ENCODE measurements at regions of chr14 and their contacts with region 1.

Region 1: DNA sequence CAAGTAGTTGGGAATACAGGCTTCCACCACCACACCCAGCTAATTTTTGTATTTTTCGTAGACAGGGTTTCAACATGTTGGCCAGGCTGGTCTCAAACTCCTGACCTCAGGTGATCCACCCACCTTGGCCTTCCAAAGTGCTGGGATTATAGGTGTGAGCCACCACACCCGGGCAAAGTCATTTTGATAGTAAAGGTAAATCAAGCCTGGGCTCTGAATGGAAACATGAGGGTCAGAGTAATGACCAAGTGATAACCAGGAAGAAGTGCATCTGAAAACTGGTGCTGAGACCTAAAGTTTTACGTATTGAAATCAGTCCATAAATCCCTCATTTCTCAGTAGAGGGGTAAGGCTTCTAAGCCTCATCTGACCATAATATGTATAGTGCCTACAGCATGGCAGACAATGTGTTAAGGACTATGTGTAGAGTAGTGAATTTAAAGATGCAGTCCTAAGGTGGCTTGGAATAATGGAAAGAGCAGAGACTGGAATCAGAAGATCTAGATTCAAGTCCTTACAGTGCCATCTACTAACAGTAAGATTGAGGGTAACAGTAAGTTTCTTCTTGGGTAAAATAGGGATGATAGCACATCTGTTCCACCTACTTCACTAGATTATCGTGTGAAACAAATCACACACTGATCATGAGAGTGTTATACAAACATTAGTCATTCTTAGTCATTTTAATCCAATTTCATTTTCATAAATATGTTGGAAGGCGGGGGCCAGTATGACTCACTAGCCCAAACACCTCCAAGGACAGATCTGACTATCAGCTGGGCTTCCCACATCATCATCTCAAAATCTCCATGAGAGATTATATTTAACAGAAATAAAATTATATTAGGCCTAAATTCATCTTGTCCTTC is 11.2 kb downstream of the MAP4K5 start:
- DNase-seq: peak; percentile 87
- H3K4me3 Mint-ChIP-seq: no peak overlapping the region
- H3K27ac Mint-ChIP-seq: peak overlapping the region; percentile 89
- H3K4me1 Mint-ChIP-seq: peaks cover 53% of the 10 kb centered on the region
- H3K27me3 Mint-ChIP-seq: no peaks in the 10 kb centered on the region

Region 2: GRCh38 chr14:49620182-49621113 is 900.7 kb before region 1 on chr14 and contains the starts of genes MGAT2 and RPL36AL:
- CTCF ChIA-PET with region 1: interaction called, 3 read pairs
- intact Hi-C with region 1: loop called (anchors 1 kb)
- DNase-seq: peak; percentile 97
- H3K4me3 Mint-ChIP-seq: peak within 1 kb of the TSS; percentile 97
- H3K27ac Mint-ChIP-seq: peak within 1 kb of the TSS; percentile 97
- H3K4me1 Mint-ChIP-seq: peaks cover 52% of the 10 kb centered on the region
- H3K27me3 Mint-ChIP-seq: no peaks in the 10 kb centered on the region
- total RNA-seq, gene MGAT2: 20.6 to 20.7 TPM
- total RNA-seq, gene RPL36AL: 250 to 266 TPM

Region 3: DNA sequence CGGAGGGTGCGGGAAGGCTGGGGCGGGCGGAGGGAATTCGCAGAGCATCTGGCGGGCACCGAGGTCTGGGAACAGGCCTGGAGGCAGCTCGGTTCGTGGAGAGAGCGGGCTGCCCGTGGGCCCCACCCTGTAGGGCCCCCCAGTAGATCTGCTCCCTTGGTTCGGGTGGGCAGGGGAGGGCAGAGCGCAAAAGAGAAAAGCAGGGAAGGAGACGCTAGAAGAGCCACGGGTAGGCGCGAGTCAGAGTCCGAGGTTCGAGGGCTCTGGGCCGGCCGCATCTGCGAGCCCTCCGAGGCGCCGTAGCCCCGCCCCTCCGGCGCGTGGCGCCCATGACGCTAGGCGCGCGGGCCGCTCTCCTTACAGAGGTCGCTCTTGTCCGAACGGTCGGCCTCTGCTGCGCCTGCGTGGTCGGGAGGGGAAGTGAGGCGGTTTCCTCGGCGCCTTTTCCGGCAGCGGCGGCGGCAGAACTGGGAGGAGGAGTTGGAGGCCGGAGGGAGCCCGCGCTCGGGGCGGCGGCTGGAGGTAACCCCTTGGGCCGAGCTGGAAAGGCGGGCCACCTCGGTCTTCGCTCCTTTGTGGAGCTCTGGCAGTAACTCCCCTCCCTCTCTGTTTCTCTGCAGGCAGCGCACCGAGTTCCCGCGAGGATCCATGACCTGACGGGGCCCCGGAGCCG is 628.4 kb before region 1 on chr14 and contains the start of gene ARF6:
- CTCF ChIA-PET with region 1: no interaction called
- intact Hi-C with region 1: loop called (anchors 1 kb)
- DNase-seq: peak; percentile 98
- H3K4me3 Mint-ChIP-seq: peak within 1 kb of the TSS; percentile 100
- H3K27ac Mint-ChIP-seq: peak within 1 kb of the TSS; percentile 100
- H3K4me1 Mint-ChIP-seq: peaks cover 19% of the 10 kb centered on the region
- H3K27me3 Mint-ChIP-seq: no peaks in the 10 kb centered on the region
- total RNA-seq, gene ARF6: 128 to 129 TPM

Region 4: DNA sequence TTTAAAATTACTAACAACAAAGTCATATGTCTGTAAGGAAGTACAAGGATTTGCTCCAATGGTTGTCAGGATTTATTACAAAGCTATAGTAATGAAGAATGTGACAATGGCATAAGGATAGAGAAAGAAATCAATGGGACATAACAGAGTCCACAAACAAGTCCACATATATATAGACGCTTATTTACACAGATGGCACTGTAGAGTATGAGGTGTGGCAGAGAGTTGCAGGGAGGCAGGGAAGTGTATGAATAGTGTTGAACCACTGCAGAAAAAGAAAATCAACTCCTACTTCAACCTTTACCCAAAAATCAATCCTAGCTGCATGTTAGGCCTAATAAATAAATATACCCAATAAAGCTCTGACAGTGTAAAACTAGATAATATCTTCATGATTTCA is 311.1 kb before region 1 on chr14:
- CTCF ChIA-PET with region 1: no interaction called
- intact Hi-C with region 1: no loop called
- DNase-seq: no peak
- H3K4me3 Mint-ChIP-seq: no peak overlapping the region
- H3K27ac Mint-ChIP-seq: no peak overlapping the region
- H3K4me1 Mint-ChIP-seq: peaks cover 5% of the 10 kb centered on the region
- H3K27me3 Mint-ChIP-seq: no peaks in the 10 kb centered on the region

Region 5: DNA sequence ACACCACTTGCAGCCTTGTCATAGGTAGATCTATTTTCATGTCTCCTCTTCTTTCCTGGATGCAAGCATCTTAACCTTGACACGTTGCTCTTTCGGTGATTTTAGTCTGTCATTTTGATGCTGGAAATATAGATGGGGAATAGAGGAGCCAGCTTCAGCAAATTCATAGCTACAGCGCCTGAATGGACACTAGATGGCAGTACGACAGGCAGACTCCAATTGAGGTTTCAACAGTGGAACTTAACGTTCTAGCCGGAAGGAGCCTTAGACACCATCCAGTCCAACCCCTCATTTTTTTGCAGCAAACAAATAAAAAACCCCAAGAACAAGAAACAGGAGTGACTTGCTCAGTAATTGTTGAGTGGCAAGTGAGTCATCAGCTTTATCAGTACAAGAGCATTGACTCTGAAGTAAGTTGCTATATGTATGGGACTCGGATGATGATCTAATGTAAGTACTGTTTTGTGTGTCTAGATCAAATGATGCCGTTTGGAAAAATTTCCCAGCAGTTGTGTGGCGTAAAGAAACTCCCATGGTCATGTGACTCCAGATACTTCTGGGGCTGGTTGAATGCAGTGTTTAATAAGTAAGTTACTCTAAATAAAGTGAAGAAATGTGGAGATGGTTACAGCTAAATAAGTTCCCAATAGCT is 200.0 kb before region 1 on chr14:
- CTCF ChIA-PET with region 1: interaction called, 28 read pairs
- intact Hi-C with region 1: loop called (anchors 1 kb)
- DNase-seq: peak; percentile 80
- H3K4me3 Mint-ChIP-seq: no peak overlapping the region
- H3K27ac Mint-ChIP-seq: no peak overlapping the region
- H3K4me1 Mint-ChIP-seq: peaks cover 25% of the 10 kb centered on the region
- H3K27me3 Mint-ChIP-seq: no peaks in the 10 kb centered on the region

Region 6: DNA sequence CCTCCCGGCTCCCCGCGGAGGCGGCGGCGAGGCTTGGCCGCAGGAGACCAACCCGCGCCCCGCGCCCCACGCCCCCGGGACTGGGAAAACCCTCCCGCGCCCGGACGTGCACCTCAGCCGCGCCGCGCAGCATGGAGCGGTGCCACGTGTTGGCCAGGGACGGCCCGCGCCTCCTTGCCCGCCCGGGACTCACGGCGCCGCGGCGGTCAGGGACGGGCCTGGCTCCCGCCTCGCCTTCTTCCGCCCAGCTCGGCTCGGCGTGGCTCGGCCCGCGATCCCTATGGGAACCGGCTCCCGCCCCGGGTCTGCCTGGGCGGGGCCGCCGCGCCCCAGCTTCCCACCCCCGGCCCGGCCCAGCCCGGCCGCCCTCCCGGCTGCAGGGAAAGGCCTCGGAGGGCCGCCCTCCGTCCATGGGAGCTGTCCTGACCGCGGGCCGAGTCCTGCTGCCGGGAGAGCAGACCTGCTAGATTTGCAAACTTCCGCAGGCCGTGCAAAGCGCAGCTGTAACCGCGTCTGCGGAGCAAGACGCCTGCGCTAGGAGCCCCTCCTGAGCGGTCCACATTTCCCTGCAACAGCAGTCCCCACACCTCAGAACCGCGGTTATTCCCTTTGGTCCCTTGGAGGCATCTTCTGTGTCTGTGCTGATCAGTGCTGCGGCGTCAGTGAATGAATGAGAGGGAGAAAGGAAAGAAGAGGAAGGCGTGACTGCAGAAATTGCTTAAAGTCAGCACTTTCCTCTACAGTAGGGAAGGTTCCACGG is 124.4 kb before region 1 on chr14 and contains the start of gene CDKL1:
- CTCF ChIA-PET with region 1: no interaction called
- intact Hi-C with region 1: loop called (anchors 2 kb)
- DNase-seq: peak; percentile 53
- H3K4me3 Mint-ChIP-seq: peak within 1 kb of the TSS; percentile 83
- H3K27ac Mint-ChIP-seq: peak within 1 kb of the TSS; percentile 59
- H3K4me1 Mint-ChIP-seq: peaks cover 13% of the 10 kb centered on the region
- H3K27me3 Mint-ChIP-seq: peaks cover 2% of the 10 kb centered on the region
- total RNA-seq, gene CDKL1: 1.5 to 2.0 TPM

Region 7: GRCh38 chr14:50726372-50727107 is 205.4 kb after region 1 on chr14:
- CTCF ChIA-PET with region 1: no interaction called
- intact Hi-C with region 1: loop called (anchors 1 kb)
- DNase-seq: peak; percentile 48
- H3K4me3 Mint-ChIP-seq: peak overlapping the region; percentile 3
- H3K27ac Mint-ChIP-seq: peak overlapping the region; percentile 83
- H3K4me1 Mint-ChIP-seq: peaks cover 28% of the 10 kb centered on the region
- H3K27me3 Mint-ChIP-seq: no peaks in the 10 kb centered on the region

Region 8: DNA sequence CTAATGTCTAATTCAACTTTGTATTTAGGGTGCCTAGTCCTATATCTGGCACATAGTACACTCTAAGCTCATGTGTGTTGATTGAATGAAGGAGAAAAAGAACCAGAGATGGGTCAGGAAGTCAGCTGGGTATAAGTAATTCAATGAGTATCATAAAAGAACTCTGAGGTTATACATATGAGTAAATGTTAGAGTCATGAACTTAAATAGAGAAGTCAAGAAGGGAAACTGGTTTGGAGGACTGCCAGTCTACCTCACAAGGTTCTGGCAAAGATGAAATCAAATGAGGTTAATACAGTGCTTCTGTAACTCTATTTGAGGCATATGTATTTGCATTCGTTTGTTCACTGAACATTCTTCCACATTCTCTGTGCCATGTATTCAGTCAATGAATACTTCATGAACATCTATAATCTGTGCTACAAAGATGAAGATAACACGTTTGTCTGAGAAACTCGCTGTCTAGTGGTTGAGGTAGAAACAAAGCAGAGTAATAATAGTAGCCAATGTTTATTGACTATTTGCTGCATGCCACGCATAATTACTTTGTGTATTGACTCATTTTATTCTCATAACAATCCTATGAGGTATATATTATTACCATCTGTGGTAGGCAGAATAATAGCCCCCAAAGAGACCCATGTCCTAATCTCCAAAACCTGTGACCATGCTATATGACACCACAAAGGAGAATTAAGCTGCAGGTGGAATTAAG is 1881.8 kb after region 1 on chr14:
- CTCF ChIA-PET with region 1: no interaction called
- intact Hi-C with region 1: loop called (anchors 5 kb)
- DNase-seq: peak; percentile 77
- H3K4me3 Mint-ChIP-seq: no peak overlapping the region
- H3K27ac Mint-ChIP-seq: no peak overlapping the region
- H3K4me1 Mint-ChIP-seq: peaks cover 50% of the 10 kb centered on the region
- H3K27me3 Mint-ChIP-seq: peaks cover 4% of the 10 kb centered on the region

Measured in activated naive CD4-positive, alpha-beta T cell treated with anti-CD3 and anti-CD28 coated beads for 36 hours (primary cell).